ENCODE measurements at regions of chr14 and their contacts with region 1.

Region 1: DNA sequence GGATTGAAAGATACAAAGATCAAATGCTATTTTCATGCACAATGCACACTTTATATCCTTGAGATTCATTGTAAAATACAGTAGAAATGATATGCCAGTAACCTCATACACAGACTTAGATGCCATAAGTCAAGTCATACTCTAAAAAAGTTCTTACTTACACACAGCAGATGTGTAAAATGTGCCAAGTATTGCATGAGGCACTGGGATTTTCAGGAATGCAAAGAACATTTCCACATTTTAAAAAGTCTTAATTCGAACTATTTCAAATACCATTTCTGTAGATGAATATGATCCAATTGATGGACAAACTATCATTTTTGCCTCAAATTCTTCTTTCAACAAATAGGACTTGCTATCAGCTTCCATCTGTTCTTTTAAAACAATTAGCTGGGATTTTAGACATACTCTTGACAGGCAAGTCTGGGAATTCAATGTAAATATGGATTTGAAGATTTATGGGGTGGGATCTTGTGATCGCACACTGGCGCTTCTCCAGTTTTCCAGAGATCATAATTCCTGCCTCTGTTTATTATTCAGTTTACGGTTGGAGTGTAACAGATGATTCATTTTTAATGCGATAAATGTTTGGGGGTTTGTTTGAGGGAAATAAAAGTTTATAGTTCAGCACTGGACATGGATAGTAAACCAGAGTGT is 183.8 kb downstream of the PAX9 start:
- DNase-seq: no peak

Region 2: GRCh38 chr14:36925094-36925493 is 79.6 kb after region 1 on chr14:
- CTCF ChIA-PET with region 1: interaction called, 12 read pairs
- POLR2A ChIA-PET with region 1: no interaction called
- DNase-seq: no peak

Region 3: GRCh38 chr14:36967892-36968555 is 122.5 kb after region 1 on chr14:
- CTCF ChIA-PET with region 1: no interaction called
- POLR2A ChIA-PET with region 1: no interaction called
- DNase-seq: no peak

Measured in HEK293T (cell line).